CD4-positive, alpha-beta memory T cell (primary cell): ENCODE measurements at regions of chr14 and their contacts with region 1.

Region 1: DNA sequence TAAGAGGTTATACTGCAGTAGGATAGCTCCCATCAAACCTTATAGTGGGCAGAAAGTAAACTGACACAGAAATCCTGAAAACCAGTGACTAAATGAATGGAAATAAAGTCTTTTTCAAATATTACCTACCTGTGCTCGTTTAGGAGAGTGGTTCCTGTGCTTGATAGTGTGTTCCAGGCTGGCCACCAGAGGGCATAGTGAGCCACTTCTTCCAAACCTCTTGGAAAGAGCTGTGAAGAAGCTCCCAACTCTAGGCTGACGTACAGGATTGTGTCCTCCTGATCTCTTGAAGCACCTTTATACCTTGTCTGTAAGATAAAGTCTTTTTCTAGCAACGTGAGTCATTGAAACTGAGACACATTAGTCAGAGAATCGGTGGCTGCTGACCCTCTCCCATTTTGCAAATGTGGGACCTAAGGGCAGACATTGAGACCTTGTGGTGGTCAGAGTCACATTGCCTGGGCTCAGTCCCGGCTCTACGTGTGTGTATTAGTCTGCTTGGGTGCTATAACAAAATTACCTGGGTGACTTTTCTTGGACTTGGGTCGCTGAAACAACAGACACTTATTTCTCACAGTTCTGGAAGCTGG is 17.6 kb downstream of the TDP1 start:
- DNase-seq: peak in 4 of 5 donors; percentile 25 to 37 (median 32)
- H3K4me3 ChIP-seq: no peak overlapping the region
- H3K4me3 Mint-ChIP-seq: no peak overlapping the region
- H3K27ac ChIP-seq: no peak overlapping the region
- H3K27ac Mint-ChIP-seq: peak overlapping the region in 1 of 7 donors; percentile 32
- H3K4me1 ChIP-seq: no peaks in the 10 kb centered on the region
- H3K4me1 Mint-ChIP-seq: peaks cover 0 to 3% (median 1%) of the 10 kb centered on the region in 4 donors
- H3K27me3 ChIP-seq: no peaks in the 10 kb centered on the region
- H3K27me3 Mint-ChIP-seq: no peaks in the 10 kb centered on the region

Region 2: DNA sequence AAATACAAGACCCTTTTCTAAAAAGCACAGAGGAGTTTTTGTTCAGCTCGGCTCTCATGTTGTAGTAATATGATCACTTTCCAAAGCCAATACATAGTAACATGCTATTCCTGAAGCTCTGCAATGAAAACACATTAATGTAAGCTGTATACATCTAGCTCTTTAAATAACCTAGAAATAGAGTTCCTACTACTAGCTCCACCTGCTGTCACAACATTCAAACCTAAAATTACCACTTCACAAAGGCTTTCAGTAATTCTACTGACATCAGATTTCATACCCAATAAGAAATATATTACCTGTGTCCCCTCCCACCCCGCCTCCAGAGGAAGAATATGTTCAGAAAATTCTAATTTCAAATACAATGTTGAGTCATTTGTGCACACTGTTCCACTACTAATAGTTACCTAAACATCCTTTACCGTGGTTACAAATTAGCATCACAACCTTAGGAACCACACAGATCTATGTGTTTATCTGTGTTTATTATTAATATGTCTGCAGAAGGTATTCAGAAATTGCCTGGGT is 36.6 kb before region 1 on chr14:
- CTCF ChIA-PET with region 1: interaction called, 40 read pairs
- POLR2A ChIA-PET with region 1: no interaction called
- intact Hi-C with region 1: loop called (anchors 1 kb)
- DNase-seq: no peak
- H3K4me3 ChIP-seq: no peak overlapping the region
- H3K4me3 Mint-ChIP-seq: no peak overlapping the region
- H3K27ac ChIP-seq: no peak overlapping the region
- H3K27ac Mint-ChIP-seq: no peak overlapping the region
- H3K4me1 ChIP-seq: no peaks in the 10 kb centered on the region
- H3K4me1 Mint-ChIP-seq: peaks cover 0 to 1% (median 0%) of the 10 kb centered on the region in 4 donors
- H3K27me3 ChIP-seq: no peaks in the 10 kb centered on the region
- H3K27me3 Mint-ChIP-seq: no peaks in the 10 kb centered on the region

Region 3: DNA sequence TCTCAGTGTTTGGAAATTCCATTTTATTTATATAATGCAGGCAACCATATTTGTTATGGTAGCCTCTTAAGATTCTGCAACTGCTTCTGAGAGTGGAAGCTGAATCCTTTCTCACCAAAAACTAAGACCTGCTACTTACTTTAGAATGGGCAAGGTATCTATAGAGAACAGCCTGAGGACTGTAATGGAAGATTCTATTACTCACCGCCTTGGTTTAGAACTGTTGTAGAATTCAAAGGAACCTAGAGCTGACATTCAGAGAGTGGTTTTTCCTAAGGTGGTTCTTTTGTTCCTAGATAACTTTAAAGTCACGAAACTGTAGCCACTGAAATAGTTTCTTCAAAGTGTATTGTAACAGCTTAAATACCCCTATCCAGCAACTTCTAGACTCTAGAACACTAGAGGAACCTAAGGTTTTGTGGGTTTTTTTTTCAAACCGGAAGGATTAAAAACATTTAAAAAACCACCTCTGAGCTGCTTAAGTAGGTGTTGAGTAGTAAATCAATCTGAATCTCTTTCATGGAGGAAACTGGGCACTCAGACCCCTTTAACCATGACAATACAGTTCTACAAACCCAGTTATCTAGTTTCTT is 13.4 kb before region 1 on chr14:
- CTCF ChIA-PET with region 1: interaction called, 52 read pairs
- POLR2A ChIA-PET with region 1: interaction called, 13 read pairs
- intact Hi-C with region 1: loop called (anchors 2 kb)
- DNase-seq: peak in 4 of 5 donors; percentile 21 to 46 (median 34)
- H3K4me3 ChIP-seq: no peak overlapping the region
- H3K4me3 Mint-ChIP-seq: peak overlapping the region in 7 of 8 donors; percentile 29 to 71 (median 63)
- H3K27ac ChIP-seq: peak overlapping the region; percentile 1
- H3K27ac Mint-ChIP-seq: peak overlapping the region; percentile 63 to 82 (median 71)
- H3K4me1 ChIP-seq: peaks cover 43% of the 10 kb centered on the region
- H3K4me1 Mint-ChIP-seq: peaks cover 41 to 75% (median 54%) of the 10 kb centered on the region in 4 donors
- H3K27me3 ChIP-seq: no peaks in the 10 kb centered on the region
- H3K27me3 Mint-ChIP-seq: no peaks in the 10 kb centered on the region

Region 4: DNA sequence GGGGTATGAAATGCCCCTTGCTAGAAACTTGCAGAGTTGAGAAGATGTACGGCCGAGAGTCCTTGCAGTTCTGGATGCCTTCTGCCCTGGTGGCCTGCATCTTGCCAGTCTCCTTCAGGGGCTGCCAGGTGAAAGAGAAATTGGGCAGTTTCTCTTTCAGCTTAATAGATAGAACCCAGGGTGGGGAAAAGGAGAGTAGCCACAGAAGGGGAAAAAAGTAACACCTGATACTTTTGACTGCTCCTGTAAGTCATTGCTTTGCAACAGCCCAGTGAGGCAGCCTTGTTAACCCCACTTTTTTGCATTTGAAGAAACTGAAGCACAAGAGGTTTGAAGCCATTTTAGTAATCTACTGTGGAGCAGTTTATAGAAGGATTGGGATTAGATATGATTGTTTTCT is 10.0 kb after region 1 on chr14:
- CTCF ChIA-PET with region 1: interaction called, 24 read pairs
- POLR2A ChIA-PET with region 1: interaction called, 3 read pairs
- intact Hi-C with region 1: no loop called
- DNase-seq: no peak
- H3K4me3 ChIP-seq: no peak overlapping the region
- H3K4me3 Mint-ChIP-seq: no peak overlapping the region
- H3K27ac ChIP-seq: no peak overlapping the region
- H3K27ac Mint-ChIP-seq: no peak overlapping the region
- H3K4me1 ChIP-seq: no peaks in the 10 kb centered on the region
- H3K4me1 Mint-ChIP-seq: no peaks in the 10 kb centered on the region
- H3K27me3 ChIP-seq: no peaks in the 10 kb centered on the region
- H3K27me3 Mint-ChIP-seq: no peaks in the 10 kb centered on the region